CD4-positive, alpha-beta memory T cell (primary cell): ENCODE measurements at regions of chr11 and their contacts with region 1.

Region 1: DNA sequence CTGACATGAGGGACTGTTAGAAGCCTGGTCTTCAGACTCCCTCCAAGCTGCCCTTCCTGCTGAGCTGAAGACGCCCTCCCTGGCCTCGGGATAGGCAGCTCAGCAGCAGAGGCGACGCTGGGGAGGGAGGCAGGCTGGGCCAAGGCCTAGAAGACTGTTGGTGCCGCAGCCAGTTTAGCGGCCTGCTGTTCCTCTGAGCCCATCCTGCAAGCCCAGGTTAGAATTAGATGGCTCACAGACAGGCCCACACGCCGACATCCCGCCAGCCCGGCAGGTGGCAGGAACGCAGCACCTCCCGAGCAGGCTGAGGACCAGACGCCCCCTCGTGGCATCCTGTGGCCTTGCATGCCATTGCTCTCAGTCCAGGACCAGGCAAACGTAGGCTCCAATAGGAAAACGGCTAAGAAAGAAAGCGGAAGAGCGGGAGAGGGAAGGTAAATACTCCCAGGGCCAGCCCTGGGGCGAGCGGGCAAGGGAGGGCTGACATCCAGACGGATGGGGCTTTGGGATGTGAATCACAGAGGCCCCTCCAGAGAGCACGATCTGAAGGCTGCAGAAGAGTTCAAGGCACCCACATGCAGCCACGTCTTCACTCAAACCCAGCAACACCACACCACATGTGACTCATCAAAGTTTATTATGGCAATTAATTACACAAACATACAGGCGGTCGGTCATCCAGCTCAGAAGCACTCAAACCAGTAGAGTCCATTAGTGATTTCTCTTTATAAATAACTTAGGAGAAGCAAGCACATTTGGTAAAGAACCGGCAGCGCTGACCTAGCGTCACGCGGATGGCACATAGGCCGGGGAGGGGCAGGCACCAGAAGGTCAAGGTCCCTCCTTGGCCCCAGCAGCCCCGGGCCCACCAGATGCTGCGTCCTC is 27.6 kb downstream of the CD5 start:
- DNase-seq: peak; percentile 87 to 91 (median 89)
- H3K4me3 ChIP-seq: peak overlapping the region in 1 of 2 donors; percentile 10
- H3K4me3 Mint-ChIP-seq: peak overlapping the region in 7 of 8 donors; percentile 3 to 66 (median 53)
- H3K27ac ChIP-seq: peak overlapping the region; percentile 19
- H3K27ac Mint-ChIP-seq: peak overlapping the region; percentile 14 to 87 (median 53)
- H3K4me1 ChIP-seq: peaks cover 18% of the 10 kb centered on the region
- H3K4me1 Mint-ChIP-seq: peaks cover 11 to 37% (median 16%) of the 10 kb centered on the region in 4 donors
- H3K27me3 ChIP-seq: no peaks in the 10 kb centered on the region
- H3K27me3 Mint-ChIP-seq: no peaks in the 10 kb centered on the region

Region 2: DNA sequence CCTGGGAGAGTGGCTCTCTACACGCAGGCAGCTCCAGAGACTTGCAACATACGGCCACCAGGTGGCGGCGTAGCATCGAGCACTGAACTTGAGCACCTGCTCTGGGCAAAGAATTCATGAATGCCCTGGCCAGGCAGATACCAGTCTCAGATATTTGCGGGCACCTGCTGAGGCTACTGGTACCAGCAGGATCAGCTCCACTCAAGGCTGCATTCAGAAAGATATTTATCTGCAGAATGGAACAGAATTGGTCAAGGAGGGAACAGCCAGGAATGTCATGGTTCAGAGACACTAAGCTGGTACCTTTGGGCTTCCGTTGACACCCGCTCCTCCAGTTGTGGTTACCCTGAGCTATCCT is 298.8 kb before region 1 on chr11:
- CTCF ChIA-PET with region 1: interaction called, 4 read pairs
- POLR2A ChIA-PET with region 1: interaction called, 4 read pairs
- intact Hi-C with region 1: loop called (anchors 1 kb)
- DNase-seq: peak; percentile 68 to 77 (median 73)
- H3K4me3 ChIP-seq: no peak overlapping the region
- H3K4me3 Mint-ChIP-seq: peak overlapping the region in 2 of 8 donors; percentile 63 to 78
- H3K27ac ChIP-seq: no peak overlapping the region
- H3K27ac Mint-ChIP-seq: peak overlapping the region in 2 of 7 donors; percentile 83 to 93
- H3K4me1 ChIP-seq: no peaks in the 10 kb centered on the region
- H3K4me1 Mint-ChIP-seq: peaks cover 0 to 3% (median 0%) of the 10 kb centered on the region in 4 donors
- H3K27me3 ChIP-seq: no peaks in the 10 kb centered on the region
- H3K27me3 Mint-ChIP-seq: peaks cover 3 to 8% of the 10 kb centered on the region in 2 donors

Region 3: DNA sequence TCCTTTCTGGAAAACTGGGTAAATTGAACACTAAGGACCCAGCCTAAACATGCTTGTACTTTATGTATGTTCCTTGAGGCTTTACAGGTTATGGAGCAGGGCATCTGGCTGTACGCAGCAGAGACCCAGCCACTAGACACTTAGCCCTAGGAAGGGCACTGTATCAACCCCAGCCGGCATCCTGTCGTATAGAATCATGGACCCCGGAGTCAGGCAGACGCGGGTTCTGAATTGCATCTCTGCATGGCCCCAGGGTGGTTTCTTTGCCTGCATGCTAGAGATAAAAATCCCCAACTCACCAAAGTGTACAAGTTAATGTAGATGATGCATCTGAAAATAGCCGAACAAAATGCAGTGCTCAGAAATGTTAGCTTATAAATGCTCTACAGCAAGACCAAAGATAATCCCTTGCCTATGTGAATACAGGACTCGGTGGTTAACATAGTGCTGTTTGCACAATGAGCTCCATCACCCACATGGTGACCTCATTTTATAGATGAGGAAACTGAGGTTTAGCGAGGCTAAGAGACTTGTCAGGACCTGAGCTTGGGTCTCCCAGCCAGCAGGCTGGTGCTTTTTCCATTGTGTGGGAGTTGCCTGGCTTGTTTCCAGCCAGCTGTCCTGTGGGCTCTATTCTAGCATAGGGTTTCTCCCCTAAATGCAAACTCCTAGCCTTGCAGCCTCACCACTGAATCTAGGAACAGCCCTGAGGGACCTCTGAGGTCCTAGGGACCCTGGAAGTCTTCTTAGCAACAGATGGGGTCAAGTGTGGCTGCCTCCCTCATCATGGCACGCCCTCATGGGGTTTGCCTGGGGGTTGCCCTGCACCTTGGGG is 151.1 kb before region 1 on chr11:
- CTCF ChIA-PET with region 1: interaction called, 10 read pairs
- POLR2A ChIA-PET with region 1: interaction called, 11 read pairs
- intact Hi-C with region 1: no loop called
- DNase-seq: peak; percentile 49 to 82 (median 52)
- H3K4me3 ChIP-seq: peak overlapping the region in 1 of 2 donors; percentile 28
- H3K4me3 Mint-ChIP-seq: peak overlapping the region; percentile 81 to 98 (median 86)
- H3K27ac ChIP-seq: peak overlapping the region; percentile 92
- H3K27ac Mint-ChIP-seq: peak overlapping the region; percentile 88 to 100 (median 97)
- H3K4me1 ChIP-seq: peaks cover 91% of the 10 kb centered on the region
- H3K4me1 Mint-ChIP-seq: peaks cover 55 to 98% (median 77%) of the 10 kb centered on the region in 4 donors
- H3K27me3 ChIP-seq: no peaks in the 10 kb centered on the region
- H3K27me3 Mint-ChIP-seq: no peaks in the 10 kb centered on the region

Region 4: DNA sequence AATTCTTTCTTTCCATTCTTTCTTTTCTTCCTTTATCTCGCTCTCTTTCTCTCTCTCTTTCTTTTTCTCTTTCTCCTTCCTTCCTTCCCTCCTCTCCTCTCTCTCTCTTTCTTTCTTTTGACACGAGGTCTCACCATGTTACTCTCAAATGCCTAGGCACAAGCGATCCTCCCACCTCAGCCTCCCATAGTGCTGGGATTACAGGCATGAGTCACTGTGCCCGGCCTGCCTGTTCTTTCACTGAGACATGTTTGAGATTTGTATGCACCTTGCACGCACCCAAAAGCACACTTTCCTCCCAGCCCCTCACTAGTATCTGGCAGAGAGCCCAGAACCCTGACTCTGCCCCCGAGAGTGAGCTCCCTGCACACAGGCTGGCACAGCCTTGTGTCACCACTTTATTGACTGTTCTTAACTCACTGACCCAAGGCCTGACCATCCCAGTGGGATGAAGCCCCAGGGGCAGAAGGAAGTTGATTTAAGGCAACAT is 101.6 kb before region 1 on chr11:
- CTCF ChIA-PET with region 1: interaction called, 3 read pairs
- POLR2A ChIA-PET with region 1: interaction called, 14 read pairs
- intact Hi-C with region 1: loop called (anchors 2 kb)
- DNase-seq: peak in 1 of 5 donors; percentile 83
- H3K4me3 ChIP-seq: no peak overlapping the region
- H3K4me3 Mint-ChIP-seq: peak overlapping the region; percentile 74 to 91 (median 86)
- H3K27ac ChIP-seq: peak overlapping the region; percentile 66
- H3K27ac Mint-ChIP-seq: peak overlapping the region; percentile 98 to 100 (median 98)
- H3K4me1 ChIP-seq: peaks cover 59% of the 10 kb centered on the region
- H3K4me1 Mint-ChIP-seq: peaks cover 53 to 85% (median 67%) of the 10 kb centered on the region in 4 donors
- H3K27me3 ChIP-seq: no peaks in the 10 kb centered on the region
- H3K27me3 Mint-ChIP-seq: no peaks in the 10 kb centered on the region

Region 5: DNA sequence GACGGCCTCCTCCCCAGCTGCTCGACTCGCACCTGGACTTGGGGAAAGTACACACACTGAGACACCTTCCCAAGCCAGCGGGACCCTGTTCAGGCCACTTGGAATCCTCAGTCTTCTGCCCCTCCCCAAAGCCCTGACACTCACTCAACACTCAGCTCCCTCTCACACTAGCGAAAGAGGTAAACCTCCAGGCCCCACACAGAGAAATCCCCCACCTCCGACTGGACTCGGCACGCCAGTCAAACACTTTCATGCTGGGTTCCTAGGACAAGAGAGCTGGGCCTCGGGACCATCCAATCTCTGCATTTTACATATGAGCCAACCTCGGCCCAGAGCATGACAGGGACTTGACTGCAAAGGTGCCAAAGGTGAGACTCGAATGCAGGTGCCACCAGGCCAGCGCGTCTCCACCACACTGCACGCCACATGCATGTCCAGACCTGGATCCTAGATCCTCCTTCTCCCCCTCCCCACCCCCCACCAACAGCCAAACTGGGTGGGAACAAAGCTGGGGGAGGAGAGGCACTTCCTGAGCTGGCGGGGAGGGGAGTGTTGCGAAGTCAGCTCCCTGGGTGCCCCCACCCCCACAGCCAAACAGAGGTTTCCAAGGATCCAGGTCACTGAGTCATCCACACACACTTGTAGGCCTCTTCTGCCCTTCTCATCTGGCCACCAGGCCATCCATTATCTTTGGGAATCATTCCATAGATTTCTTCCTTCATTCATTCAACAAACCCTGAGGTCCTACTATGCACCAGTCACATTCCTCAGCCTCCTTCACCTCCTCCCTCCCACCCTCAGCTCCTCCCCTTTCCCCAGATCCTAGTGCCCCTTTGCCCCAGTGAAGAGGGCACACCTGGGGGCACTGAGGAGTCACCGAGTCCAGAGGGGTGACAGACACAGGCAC is 38.3 kb before region 1 on chr11:
- CTCF ChIA-PET with region 1: interaction called, 7 read pairs
- POLR2A ChIA-PET with region 1: interaction called, 30 read pairs
- intact Hi-C with region 1: no loop called
- DNase-seq: peak in 1 of 5 donors; percentile 74
- H3K4me3 ChIP-seq: peak overlapping the region in 1 of 2 donors; percentile 16
- H3K4me3 Mint-ChIP-seq: peak overlapping the region; percentile 71 to 89 (median 80)
- H3K27ac ChIP-seq: peak overlapping the region; percentile 87
- H3K27ac Mint-ChIP-seq: peak overlapping the region; percentile 95 to 99 (median 97)
- H3K4me1 ChIP-seq: peaks cover 52% of the 10 kb centered on the region
- H3K4me1 Mint-ChIP-seq: peaks cover 44 to 75% (median 50%) of the 10 kb centered on the region in 4 donors
- H3K27me3 ChIP-seq: no peaks in the 10 kb centered on the region
- H3K27me3 Mint-ChIP-seq: no peaks in the 10 kb centered on the region

Region 6: GRCh38 chr11:61141601-61142028 is 11.7 kb after region 1 on chr11:
- CTCF ChIA-PET with region 1: interaction called, 16 read pairs
- POLR2A ChIA-PET with region 1: interaction called, 4 read pairs
- intact Hi-C with region 1: no loop called
- DNase-seq: no peak
- H3K4me3 ChIP-seq: no peak overlapping the region
- H3K4me3 Mint-ChIP-seq: no peak overlapping the region
- H3K27ac ChIP-seq: no peak overlapping the region
- H3K27ac Mint-ChIP-seq: no peak overlapping the region
- H3K4me1 ChIP-seq: no peaks in the 10 kb centered on the region
- H3K4me1 Mint-ChIP-seq: peaks cover under 1 to 6% (median 2%) of the 10 kb centered on the region in 4 donors
- H3K27me3 ChIP-seq: no peaks in the 10 kb centered on the region
- H3K27me3 Mint-ChIP-seq: no peaks in the 10 kb centered on the region